HEK293 (cell line): ENCODE measurements at regions of chr12 and their contacts with region 1.

Region 1: GRCh38 chr12:103965590-103966504 is at the start of gene TDG:
- H3K4me3 ChIP-seq: peak within 1 kb of the TSS; percentile 83
- H3K27ac ChIP-seq: peak within 1 kb of the TSS; percentile 68
- H3K4me1 ChIP-seq: peaks cover 7% of the 10 kb centered on the region
- CTCF ChIP-seq: peak; percentile 95

Region 2: GRCh38 chr12:103840876-103841689 is 124.8 kb before region 1 on chr12 and contains the start of gene NT5DC3:
- CTCF ChIA-PET with region 1: no interaction called
- POLR2A ChIA-PET with region 1: interaction called, 11 read pairs
- H3K4me3 ChIP-seq: peak within 1 kb of the TSS; percentile 70
- H3K27ac ChIP-seq: peak within 1 kb of the TSS; percentile 61; the same call in 1 of the 2 replicates
- H3K4me1 ChIP-seq: peaks cover 3% of the 10 kb centered on the region; the same call in 1 of the 2 replicates
- CTCF ChIP-seq: no peak

Region 3: DNA sequence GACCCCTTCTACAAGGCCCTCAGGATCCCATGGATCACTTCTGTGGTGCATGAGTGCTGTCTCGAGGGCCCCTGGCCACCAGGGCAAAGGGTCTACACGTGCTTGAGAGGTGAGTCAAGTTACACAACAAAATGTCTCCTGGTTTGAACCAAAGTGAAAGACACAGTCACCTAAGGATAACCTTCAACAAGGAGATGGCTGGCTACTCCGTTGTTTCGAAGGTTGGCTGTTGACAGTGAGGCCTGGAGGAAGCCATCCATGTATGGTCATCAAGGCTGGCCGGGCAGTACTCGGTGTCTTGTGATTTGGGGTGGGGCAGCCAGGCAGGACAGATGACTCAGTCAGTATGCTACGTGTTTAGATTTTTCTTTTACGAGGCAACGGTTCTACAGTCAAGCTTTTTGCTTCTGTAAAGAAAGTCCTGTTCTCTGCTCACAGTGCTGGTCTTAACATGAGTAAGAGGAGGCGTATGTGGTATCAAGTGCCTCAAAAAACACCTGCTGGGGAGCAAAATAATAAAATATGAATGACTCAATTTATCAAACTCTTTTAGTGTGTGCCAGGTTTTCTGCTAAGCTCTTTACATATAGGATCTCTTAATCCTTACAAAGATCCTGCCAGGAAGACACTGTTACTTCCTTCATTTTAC is 106.8 kb before region 1 on chr12:
- CTCF ChIA-PET with region 1: no interaction called
- POLR2A ChIA-PET with region 1: no interaction called
- H3K4me3 ChIP-seq: no peak overlapping the region
- H3K27ac ChIP-seq: no peak overlapping the region
- H3K4me1 ChIP-seq: peaks cover 5% of the 10 kb centered on the region; the same call in 1 of the 2 replicates
- CTCF ChIP-seq: no peak

Region 4: DNA sequence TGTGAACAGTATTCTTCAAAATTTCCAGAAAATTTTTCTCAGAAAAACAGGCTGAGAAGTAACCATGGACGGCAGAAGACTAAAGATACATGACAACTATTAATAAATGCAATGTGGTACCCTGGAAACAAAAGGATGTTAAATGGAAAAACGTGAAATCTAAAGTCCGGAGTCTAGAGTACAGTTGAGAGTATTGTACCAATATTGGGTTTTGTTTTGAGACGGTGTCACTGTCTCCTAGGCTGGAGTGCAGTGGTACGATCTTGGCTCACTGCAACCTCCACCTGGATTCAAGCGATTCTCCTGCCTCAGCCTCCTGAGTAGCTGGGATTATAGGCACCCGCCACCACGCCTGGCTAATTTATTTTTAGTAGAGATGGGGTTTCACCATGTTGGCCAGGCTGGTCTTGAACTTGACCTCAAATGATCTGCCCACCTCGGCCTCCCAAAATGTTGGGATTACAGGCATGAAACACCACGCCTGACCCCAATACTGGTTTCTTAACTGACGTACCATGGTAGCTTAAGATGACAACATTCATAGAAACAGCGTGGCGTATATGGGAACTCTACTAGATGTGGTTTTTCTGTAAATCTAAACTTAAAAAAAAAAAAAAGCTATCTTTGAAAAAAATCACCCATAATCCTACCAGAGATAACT is 17.0 kb before region 1 on chr12:
- CTCF ChIA-PET with region 1: no interaction called
- POLR2A ChIA-PET with region 1: interaction called, 13 read pairs
- H3K4me3 ChIP-seq: no peak overlapping the region
- H3K27ac ChIP-seq: no peak overlapping the region
- H3K4me1 ChIP-seq: no peaks in the 10 kb centered on the region
- CTCF ChIP-seq: no peak

Region 5: GRCh38 chr12:104064031-104064822 is 98.4 kb after region 1 on chr12 and contains the start of gene HCFC2:
- CTCF ChIA-PET with region 1: interaction called, 4 read pairs
- POLR2A ChIA-PET with region 1: interaction called, 15 read pairs
- H3K4me3 ChIP-seq: peak within 1 kb of the TSS; percentile 93
- H3K27ac ChIP-seq: peak within 1 kb of the TSS; percentile 82
- H3K4me1 ChIP-seq: peaks cover 3% of the 10 kb centered on the region; the same call in 1 of the 2 replicates
- CTCF ChIP-seq: peak; percentile 56; the same call in 1 of the 2 replicates

Region 6: DNA sequence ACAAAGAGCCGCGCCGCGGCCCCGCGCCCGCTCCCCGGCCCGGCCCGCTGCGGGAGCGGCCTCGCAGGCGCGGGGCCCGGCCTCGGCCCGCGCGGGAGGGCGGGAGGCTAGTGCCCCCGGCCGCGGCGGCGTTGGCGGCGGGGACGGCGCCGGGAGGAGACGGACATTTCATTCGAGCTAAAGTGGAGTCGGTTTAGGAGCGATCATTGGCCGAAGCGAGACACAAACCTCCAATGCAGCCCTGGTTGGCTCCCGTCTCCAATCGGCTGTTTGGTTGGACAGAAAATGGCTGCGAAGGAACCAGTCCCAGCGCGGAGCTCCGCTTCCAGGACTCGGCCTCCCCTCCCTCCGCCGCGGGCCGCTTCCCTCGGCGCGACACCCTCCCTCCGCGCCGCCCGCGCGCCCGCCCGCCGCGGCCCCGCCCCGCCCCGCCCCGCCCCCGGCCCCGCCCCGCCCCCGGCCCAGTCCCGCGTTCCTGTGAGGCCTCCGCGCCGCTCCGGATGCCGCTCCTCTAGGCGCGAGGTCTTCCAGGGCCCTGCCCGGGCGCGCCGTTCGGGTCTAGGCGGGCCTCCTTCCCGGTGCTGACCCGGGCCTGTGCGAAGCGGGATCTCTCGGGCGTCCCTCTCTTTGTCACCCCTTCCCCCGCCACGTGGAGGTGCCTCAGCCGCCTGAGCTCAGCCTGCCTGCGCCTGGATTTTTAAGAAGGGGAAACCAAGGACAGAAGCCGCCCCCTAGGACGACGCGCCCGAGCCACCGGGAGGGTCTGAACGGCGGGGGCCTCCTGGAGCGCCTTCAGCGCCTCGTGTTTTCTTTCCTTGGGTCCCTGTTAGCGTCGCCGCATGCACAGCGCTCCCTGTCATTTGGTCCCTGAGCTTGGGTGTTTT is 172.3 kb after region 1 on chr12 and contains the start of gene NFYB:
- CTCF ChIA-PET with region 1: no interaction called
- POLR2A ChIA-PET with region 1: interaction called, 16 read pairs
- H3K4me3 ChIP-seq: peak within 1 kb of the TSS; percentile 88
- H3K27ac ChIP-seq: peak within 1 kb of the TSS; percentile 97
- H3K4me1 ChIP-seq: peaks cover 5% of the 10 kb centered on the region; the same call in 1 of the 2 replicates
- CTCF ChIP-seq: no peak